ENCODE measurements at regions of chr2 and their contacts with region 1.

Region 1: GRCh38 chr2:14132386-14132785 is 500.1 kb upstream of the LRATD1 start:
- DNase-seq: no peak
- H3K4me3 ChIP-seq: no peak overlapping the region
- H3K4me3 Mint-ChIP-seq: no peak overlapping the region
- H3K27ac Mint-ChIP-seq: no peak overlapping the region
- H3K4me1 ChIP-seq: no peaks in the 10 kb centered on the region
- H3K4me1 Mint-ChIP-seq: no peaks in the 10 kb centered on the region
- H3K27me3 ChIP-seq: no peaks in the 10 kb centered on the region
- H3K27me3 Mint-ChIP-seq: peaks cover 4% of the 10 kb centered on the region
- CTCF ChIP-seq: no peak

Region 2: DNA sequence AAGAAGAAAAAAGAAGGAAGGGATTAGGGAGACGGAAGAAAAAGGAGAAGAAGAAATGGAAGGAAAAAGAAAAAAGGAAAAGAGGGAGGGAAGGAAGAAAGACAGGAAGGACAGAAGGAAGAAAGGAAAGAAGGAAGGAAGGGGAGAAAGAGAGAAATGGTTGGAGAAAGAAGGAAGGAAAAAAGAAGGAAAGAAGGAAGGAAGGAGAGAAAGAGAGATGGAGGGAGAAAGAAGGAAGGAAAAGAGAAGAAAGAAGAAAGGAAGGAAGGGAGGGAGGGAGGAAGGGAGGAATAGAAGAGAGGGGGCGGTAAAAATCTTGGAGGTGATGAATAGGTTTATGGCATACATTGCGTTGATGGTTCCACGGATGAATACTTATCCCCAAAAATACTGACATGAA is 39.8 kb before region 1 on chr2:
- CTCF ChIA-PET with region 1: no interaction called
- POLR2A ChIA-PET with region 1: no interaction called
- intact Hi-C with region 1: loop called (anchors 1 kb)
- DNase-seq: no peak
- H3K4me3 ChIP-seq: no peak overlapping the region
- H3K4me3 Mint-ChIP-seq: no peak overlapping the region
- H3K27ac Mint-ChIP-seq: no peak overlapping the region
- H3K4me1 ChIP-seq: no peaks in the 10 kb centered on the region
- H3K4me1 Mint-ChIP-seq: no peaks in the 10 kb centered on the region
- H3K27me3 ChIP-seq: no peaks in the 10 kb centered on the region
- H3K27me3 Mint-ChIP-seq: no peaks in the 10 kb centered on the region
- CTCF ChIP-seq: no peak